HEK293 (cell line): ENCODE measurements at regions of chr1 and their contacts with region 1.

Region 1: DNA sequence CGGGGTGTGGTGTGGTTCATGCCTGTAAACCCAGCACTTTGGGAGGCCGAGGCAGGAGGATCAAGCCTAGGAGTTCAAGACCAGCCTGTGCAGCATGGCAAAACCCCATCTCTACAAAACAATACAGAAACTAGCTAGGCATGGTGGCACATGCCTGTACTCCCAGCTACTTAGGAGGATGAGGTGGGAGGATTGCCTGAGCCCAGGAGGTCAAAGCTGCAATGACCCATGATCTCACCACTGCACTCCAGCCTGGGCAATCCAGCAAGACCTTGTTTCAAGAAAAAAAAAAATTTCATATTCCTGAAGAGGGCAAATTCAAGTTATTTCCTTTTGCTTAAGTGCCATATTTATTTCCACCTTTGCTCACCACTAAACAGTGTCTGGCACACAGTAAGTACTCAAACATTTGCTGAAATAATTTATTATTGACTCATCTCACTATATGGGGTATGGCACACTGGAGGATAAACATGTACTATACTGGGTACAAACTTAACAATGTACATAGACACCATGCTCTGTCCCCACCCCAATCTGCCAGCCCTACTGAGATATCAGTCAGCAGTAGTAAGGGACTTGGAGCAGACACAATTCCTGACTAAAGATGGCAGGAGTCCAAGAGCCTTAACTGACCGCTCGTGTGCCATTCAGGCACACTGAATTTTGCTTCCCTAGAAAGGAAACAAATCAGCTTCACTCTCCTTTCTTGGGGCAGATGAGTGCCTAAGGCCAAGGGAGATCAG is 15.5 kb downstream of the MEAF6 start:
- H3K4me3 ChIP-seq: no peak overlapping the region
- H3K27ac ChIP-seq: no peak overlapping the region
- H3K4me1 ChIP-seq: 0 out of 2 replicates have a peak, but pooled peaks cover 3% of the 10 kb centered on the region
- CTCF ChIP-seq: no peak

Region 2: GRCh38 chr1:37509181-37509580 is 10.1 kb after region 1 on chr1:
- CTCF ChIA-PET with region 1: interaction called, 20 read pairs
- POLR2A ChIA-PET with region 1: interaction called, 5 read pairs
- H3K4me3 ChIP-seq: no peak overlapping the region
- H3K27ac ChIP-seq: no peak overlapping the region
- H3K4me1 ChIP-seq: no peaks in the 10 kb centered on the region
- CTCF ChIP-seq: peak; percentile 55